Activated CD4-positive, alpha-beta memory T cell treated with anti-CD3 and anti-CD28 coated beads for 36 hours (primary cell): ENCODE measurements at regions of chr6 and their contacts with region 1.

Region 1: GRCh38 chr6:99588618-99589289 is 17.9 kb upstream of the PRDM13 start:
- DNase-seq: peak; percentile 82
- H3K4me3 Mint-ChIP-seq: peak overlapping the region; percentile 77
- H3K27ac Mint-ChIP-seq: no peak overlapping the region
- H3K4me1 Mint-ChIP-seq: peaks cover 17% of the 10 kb centered on the region
- H3K27me3 Mint-ChIP-seq: peaks cover 51% of the 10 kb centered on the region

Region 2: GRCh38 chr6:99467509-99468106 is 121.1 kb before region 1 on chr6:
- CTCF ChIA-PET with region 1: interaction called, 10 read pairs
- POLR2A ChIA-PET with region 1: no interaction called
- intact Hi-C with region 1: loop called (anchors 5 kb)
- DNase-seq: no peak
- H3K4me3 Mint-ChIP-seq: no peak overlapping the region
- H3K27ac Mint-ChIP-seq: no peak overlapping the region
- H3K4me1 Mint-ChIP-seq: no peaks in the 10 kb centered on the region
- H3K27me3 Mint-ChIP-seq: no peaks in the 10 kb centered on the region

Region 3: DNA sequence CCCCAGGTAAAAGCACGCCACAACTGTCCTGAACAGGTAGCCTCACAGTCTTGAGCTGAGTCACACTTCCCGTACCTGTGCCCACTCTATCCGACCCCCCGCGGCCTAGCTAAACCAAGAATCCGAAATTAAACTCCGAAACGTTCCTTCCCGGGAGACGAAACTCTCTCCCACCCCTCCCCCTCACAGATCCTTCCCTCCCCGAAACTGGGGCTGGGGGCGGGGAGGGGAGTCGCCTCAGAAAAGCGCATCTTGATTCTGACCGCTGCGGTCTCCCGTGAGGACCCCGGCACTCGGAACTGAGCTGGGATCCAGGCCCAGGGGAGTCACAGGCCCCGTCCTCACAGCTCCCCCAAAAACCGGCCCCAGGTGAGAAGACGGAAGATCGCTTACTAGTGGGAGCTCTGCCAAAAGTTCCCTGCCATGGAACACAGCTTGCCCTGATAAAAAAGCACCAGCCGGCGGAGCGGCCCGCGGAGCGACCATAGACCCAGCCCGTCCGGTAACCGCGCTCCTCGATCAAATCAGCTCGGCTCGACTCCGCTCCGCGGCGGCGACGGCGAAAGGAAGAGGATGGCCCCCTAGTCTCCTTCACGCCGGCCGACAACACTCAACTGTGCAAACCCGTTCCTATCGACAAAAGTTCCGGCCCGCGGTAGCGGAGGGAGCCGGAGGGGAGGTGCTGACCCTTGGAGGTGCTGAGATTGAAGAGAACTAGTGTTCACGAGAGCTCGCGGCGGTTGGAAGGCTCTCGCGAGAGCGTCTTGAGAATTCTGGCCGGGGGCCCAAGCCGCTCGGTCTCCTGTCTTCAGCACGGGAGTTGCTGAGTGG is 20.4 kb before region 1 on chr6 and contains the start of gene CCNC:
- CTCF ChIA-PET with region 1: interaction called, 15 read pairs
- POLR2A ChIA-PET with region 1: no interaction called
- intact Hi-C with region 1: no loop called
- DNase-seq: peak; percentile 94
- H3K4me3 Mint-ChIP-seq: peak within 1 kb of the TSS; percentile 97
- H3K27ac Mint-ChIP-seq: peak within 1 kb of the TSS; percentile 94
- H3K4me1 Mint-ChIP-seq: peaks cover 25% of the 10 kb centered on the region
- H3K27me3 Mint-ChIP-seq: no peaks in the 10 kb centered on the region
- total RNA-seq, gene CCNC: 59.9 to 64.0 TPM

Region 4: GRCh38 chr6:99603421-99604165 is 14.8 kb after region 1 on chr6:
- CTCF ChIA-PET with region 1: interaction called, 13 read pairs
- POLR2A ChIA-PET with region 1: interaction called, 6 read pairs
- intact Hi-C with region 1: loop called (anchors 1 kb)
- DNase-seq: no peak
- H3K4me3 Mint-ChIP-seq: peak overlapping the region; percentile 35
- H3K27ac Mint-ChIP-seq: no peak overlapping the region
- H3K4me1 Mint-ChIP-seq: peaks cover 27% of the 10 kb centered on the region
- H3K27me3 Mint-ChIP-seq: peaks cover 81% of the 10 kb centered on the region

Region 5: GRCh38 chr6:99613409-99613704 is 24.6 kb after region 1 on chr6:
- CTCF ChIA-PET with region 1: interaction called, 30 read pairs
- POLR2A ChIA-PET with region 1: interaction called, 4 read pairs
- intact Hi-C with region 1: loop called (anchors 1 kb)
- DNase-seq: peak; percentile 59
- H3K4me3 Mint-ChIP-seq: no peak overlapping the region
- H3K27ac Mint-ChIP-seq: no peak overlapping the region
- H3K4me1 Mint-ChIP-seq: peaks cover 25% of the 10 kb centered on the region
- H3K27me3 Mint-ChIP-seq: peaks cover 78% of the 10 kb centered on the region

Region 6: GRCh38 chr6:99689916-99690685 is 101.3 kb after region 1 on chr6:
- CTCF ChIA-PET with region 1: no interaction called
- POLR2A ChIA-PET with region 1: no interaction called
- intact Hi-C with region 1: no loop called
- DNase-seq: no peak
- H3K4me3 Mint-ChIP-seq: no peak overlapping the region
- H3K27ac Mint-ChIP-seq: no peak overlapping the region
- H3K4me1 Mint-ChIP-seq: no peaks in the 10 kb centered on the region
- H3K27me3 Mint-ChIP-seq: peaks cover 14% of the 10 kb centered on the region

Region 7: DNA sequence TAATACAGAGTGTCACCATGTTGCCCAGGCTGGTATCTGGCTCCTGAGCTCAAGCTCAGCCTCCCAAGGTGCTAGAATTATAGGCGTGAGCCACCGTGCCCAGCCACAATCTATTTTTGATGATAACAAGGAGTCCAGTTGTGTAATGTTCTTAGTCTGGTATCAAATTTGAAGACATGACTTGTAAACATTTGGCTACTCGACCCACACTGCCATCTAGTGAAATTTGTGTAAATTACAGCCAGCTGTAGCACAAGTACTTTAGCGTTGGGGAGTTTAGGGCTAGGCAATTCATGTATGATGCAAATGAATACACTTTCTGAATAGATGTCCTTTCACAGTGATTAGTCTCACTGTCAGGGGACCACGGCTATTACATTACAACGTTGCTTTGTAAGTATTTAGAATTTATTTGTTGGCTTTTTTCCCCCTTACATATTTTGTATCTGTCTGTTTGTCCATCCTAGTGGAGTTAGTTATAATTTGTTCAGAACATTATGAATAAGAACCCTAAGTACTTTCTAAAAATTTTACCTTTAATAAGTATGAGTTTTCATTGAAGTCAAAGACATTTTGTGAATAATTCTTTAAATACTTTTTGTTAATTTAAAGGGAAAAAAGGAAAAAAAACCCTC is 157.6 kb after region 1 on chr6:
- CTCF ChIA-PET with region 1: interaction called, 108 read pairs
- POLR2A ChIA-PET with region 1: interaction called, 4 read pairs
- intact Hi-C with region 1: loop called (anchors 1 kb)
- DNase-seq: peak; percentile 56
- H3K4me3 Mint-ChIP-seq: no peak overlapping the region
- H3K27ac Mint-ChIP-seq: no peak overlapping the region
- H3K4me1 Mint-ChIP-seq: no peaks in the 10 kb centered on the region
- H3K27me3 Mint-ChIP-seq: peaks cover 16% of the 10 kb centered on the region

Region 8: DNA sequence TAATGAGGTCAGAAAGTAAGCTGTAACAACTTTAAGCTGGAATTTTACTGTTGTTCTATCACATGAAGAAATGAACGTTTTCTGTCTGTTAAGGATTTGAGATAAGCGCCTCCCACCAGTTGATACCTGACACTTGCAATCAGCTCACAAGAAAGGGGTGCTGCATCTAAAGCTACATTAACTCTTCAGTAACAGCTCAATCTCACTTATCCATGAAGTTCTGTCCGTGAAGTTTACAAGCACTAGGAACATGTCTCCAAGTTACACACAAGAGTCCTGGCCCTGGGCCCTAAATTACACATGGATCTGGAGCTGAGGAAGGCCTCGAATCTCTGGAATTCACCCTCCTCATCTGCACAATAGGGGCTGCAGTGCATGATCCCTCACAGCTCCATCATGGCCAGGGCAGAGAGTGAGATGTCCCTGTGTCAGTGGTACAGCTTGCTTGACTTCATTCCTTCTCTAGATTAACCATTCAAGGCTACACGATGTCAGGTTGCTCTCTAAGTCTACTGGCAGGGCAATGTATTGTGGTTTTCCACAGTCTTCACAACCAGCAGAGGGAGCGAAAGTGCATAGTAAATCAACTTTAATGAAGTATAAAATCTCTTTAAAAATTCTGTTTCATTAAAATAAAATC is 587.7 kb after region 1 on chr6:
- CTCF ChIA-PET with region 1: no interaction called
- POLR2A ChIA-PET with region 1: no interaction called
- intact Hi-C with region 1: no loop called
- DNase-seq: no peak
- H3K4me3 Mint-ChIP-seq: no peak overlapping the region
- H3K27ac Mint-ChIP-seq: no peak overlapping the region
- H3K4me1 Mint-ChIP-seq: peaks cover 4% of the 10 kb centered on the region
- H3K27me3 Mint-ChIP-seq: peaks cover 3% of the 10 kb centered on the region